ENCODE measurements at regions of chr6 and their contacts with region 1.

Region 1: DNA sequence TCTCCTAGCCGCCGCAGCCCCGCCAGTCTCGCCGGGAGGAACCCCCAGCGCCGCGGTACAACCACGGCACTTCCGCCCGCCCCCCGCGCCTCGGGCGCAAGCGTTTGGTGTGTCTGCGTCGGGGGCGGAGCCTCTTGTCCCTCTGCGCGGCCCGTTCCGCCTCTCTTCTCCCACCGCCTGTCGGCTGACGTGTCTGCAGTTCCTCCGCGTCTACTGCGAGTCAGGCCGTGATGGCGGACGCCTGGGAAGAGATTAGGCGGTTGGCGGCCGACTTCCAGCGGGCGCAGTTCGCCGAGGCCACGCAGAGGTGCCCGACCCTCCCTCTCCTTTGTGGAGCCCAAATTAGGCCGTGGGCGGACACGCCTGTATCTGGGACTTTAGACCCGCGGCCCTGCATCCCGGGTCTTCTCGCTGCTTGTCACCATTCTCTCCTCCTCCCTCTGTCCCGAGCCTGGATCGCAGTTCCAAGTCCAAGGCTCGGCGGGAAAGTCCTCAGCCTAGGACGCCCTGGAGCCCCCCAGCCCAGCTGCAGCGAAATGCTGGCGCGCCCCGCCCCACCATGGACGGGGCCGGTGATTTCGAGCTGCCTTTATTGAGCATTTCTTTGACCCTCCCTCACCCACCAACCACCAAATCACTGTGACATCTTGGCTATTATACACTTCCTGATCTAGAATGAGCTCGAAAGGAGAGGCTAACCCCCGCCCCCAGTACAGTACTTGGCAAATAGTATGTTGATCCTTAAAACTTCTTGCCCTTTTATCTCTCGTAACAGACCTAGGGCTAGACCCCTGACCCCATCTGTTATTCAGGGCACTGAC is at the start of gene UFL1:
- DNase-seq: peak; percentile 88
- ATAC-seq: peak; percentile 93
- H3K4me3 ChIP-seq: peak within 1 kb of the TSS; percentile 75
- H3K27ac ChIP-seq: peak within 1 kb of the TSS; percentile 76
- H3K4me1 ChIP-seq: peaks cover 22% of the 10 kb centered on the region
- H3K27me3 ChIP-seq: no peaks in the 10 kb centered on the region
- CTCF ChIP-seq: no peak
- total RNA-seq, gene UFL1: 10.4 and 10.9 TPM in 2 replicates

Region 2: DNA sequence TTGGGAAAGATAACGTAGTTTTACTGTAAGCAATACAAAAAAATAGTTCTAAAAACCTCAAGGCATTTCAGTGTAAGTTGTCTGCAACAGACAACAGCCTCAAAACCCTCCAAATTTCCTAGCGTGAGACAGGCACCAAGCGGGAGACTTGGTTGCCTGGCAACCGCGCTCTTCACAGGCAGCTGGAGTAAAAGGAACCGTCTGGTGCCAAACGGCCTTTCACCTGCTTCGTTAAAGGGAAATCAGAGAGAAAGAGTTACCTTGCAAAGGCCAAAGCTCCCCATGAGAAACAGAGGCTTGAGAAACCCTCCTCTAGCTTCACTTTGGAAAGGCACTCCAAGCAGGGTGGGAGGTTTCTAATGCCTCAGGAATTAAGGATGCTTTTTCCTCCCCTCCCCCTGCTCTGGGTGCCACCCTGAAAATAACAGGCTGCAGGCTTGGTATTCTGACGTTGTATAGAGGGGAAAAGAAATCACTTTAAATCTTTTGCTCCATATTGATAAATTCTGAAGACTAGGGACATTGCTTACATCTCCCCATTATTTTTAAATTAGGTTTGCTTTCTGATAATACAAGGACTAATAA is 130.0 kb before region 1 on chr6:
- CTCF ChIA-PET with region 1: no interaction called
- POLR2A ChIA-PET with region 1: no interaction called
- intact Hi-C with region 1: loop called (anchors 10 kb)
- DNase-seq: peak; percentile 40
- ATAC-seq: no peak
- H3K4me3 ChIP-seq: no peak overlapping the region
- H3K27ac ChIP-seq: no peak overlapping the region
- H3K4me1 ChIP-seq: 0 out of 2 replicates have a peak, but pooled peaks cover 3% of the 10 kb centered on the region
- H3K27me3 ChIP-seq: no peaks in the 10 kb centered on the region
- CTCF ChIP-seq: no peak